GM10248 (cell line): ENCODE measurements at regions of chr21 and their contacts with region 1.

Region 1: DNA sequence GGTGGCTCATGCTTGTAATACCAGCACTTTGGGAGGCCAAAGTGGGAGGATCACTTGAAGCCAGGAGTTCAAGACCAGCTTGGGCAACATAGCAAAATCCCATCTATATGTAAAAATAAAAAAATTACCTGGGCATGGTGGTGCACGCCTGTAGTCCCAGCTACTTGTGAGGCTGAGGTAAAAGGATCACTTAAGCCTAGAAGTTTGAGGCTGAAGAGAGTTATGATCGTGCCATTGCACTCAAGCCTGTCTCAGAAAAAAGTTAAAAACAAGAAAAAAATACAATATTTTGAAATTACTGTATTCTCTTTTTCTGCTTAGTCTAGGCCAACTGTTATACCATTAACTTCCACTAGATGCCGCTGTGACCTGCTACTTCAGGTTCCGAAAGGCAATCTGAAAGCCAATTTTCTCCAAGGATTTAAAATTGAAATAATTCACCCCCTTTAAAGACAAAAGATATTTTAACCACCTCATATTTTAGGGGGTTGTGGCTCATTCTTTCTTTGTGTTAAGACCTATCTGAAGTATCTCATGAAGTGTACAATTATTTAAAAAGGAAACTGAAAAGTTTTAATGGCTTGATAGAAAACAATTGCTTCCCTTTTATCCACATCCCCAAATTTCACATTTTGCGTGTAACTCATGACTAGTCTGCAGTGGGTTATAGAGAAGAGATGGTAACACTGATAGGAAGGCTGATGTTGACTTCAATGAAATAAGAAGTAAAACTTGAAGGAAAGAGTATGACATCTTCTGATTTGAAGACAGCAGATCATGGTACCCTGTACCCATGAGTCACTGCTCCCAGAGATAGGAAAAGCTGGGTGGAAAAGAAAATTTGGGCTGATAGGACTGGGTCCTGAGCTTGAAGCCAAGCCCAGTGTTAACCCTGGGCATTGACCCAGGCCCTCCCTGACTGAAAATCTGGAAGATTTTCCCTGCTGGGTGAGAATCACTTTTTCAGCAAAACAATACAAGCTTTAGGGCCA is 24.4 kb upstream of the CLDN14 start:
- DNase-seq: no peak
- CTCF ChIP-seq: peak; percentile 83

Region 2: GRCh38 chr21:36535618-36536241 is 31.4 kb after region 1 on chr21:
- CTCF ChIA-PET with region 1: interaction called, 30 read pairs
- POLR2A ChIA-PET with region 1: no interaction called
- DNase-seq: peak; percentile 67
- CTCF ChIP-seq: no peak

Region 3: GRCh38 chr21:36576441-36576840 is 72.1 kb after region 1 on chr21:
- CTCF ChIA-PET with region 1: interaction called, 15 read pairs
- POLR2A ChIA-PET with region 1: no interaction called
- DNase-seq: no peak
- CTCF ChIP-seq: no peak

Region 4: DNA sequence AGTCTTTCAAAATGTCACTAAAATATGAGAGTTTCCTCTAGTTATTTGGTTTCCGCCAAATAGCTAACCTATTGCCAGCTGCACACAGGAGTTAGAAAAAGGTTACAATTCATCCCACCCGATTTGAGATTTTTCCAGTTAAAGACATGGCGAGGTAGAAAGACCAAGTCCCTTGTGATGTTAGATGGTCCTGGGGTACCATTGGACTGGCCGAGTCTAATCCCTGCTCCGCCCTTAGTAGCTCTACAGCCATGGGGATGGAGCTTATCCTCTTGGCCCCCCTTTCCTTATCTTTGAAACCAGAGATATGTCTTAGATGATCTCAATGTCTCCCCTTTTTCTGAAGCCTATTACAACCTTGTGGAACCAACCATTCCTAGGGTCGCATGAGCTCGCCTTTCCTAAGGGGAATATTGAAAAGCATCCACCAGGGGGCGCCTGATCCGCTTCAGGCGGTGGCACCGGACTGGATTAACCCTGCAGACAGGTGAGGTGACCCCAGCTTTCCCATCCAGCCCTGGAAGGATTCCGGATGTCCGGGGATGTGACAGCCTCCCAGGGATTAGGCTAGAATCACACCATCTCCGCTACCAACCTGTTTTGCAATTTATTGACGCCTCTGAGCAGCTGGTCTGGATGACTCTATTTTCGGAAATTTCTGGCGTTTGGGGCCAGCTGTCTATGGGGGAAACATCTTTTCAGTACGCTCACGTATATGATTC is 126.3 kb after region 1 on chr21:
- CTCF ChIA-PET with region 1: interaction called, 12 read pairs
- POLR2A ChIA-PET with region 1: no interaction called
- DNase-seq: peak; percentile 74
- CTCF ChIP-seq: peak; percentile 74